ENCODE measurements at regions of chr7 and their contacts with region 1.

Region 1: GRCh38 chr7:91852263-91852741 is 28.2 kb downstream of the MTERF1 start:
- DNase-seq: no peak
- ATAC-seq: peak; percentile 95
- H3K4me3 Mint-ChIP-seq: no peak overlapping the region
- H3K27ac Mint-ChIP-seq: no peak overlapping the region
- H3K4me1 Mint-ChIP-seq: no peaks in the 10 kb centered on the region
- H3K27me3 Mint-ChIP-seq: no peaks in the 10 kb centered on the region; the same call in 1 of the 2 replicates
- CTCF ChIP-seq: peak; percentile 46

Region 2: DNA sequence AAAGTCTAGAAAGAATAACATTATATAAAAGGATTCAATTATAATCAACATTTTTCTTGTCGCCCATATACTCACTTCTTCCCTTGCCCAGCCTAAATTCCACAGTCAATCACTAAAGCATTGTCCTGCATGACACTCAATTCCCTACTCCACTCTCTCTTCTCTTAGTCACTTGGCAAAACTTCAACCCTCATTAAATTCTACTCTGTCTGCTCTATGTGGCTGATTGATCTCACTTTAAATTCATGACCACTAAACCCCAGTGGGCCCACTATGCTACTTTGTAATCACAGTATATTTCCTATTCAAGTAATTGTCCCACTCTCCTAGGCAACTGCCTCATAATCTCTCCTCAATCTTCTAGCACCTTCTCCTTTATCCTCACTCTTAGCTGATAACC is 25.9 kb before region 1 on chr7:
- CTCF ChIA-PET with region 1: interaction called, 17 read pairs
- POLR2A ChIA-PET with region 1: no interaction called
- DNase-seq: no peak
- ATAC-seq: no peak
- H3K4me3 Mint-ChIP-seq: no peak overlapping the region
- H3K27ac Mint-ChIP-seq: no peak overlapping the region
- H3K4me1 Mint-ChIP-seq: no peaks in the 10 kb centered on the region
- H3K27me3 Mint-ChIP-seq: no peaks in the 10 kb centered on the region; the same call in 1 of the 2 replicates
- CTCF ChIP-seq: no peak

Region 3: GRCh38 chr7:91913612-91914011 is 61.3 kb after region 1 on chr7:
- CTCF ChIA-PET with region 1: no interaction called
- POLR2A ChIA-PET with region 1: no interaction called
- DNase-seq: no peak
- ATAC-seq: no peak
- H3K4me3 Mint-ChIP-seq: no peak overlapping the region
- H3K27ac Mint-ChIP-seq: no peak overlapping the region
- H3K4me1 Mint-ChIP-seq: peaks cover 11% of the 10 kb centered on the region
- H3K27me3 Mint-ChIP-seq: peaks cover 11% of the 10 kb centered on the region; the same call in 1 of the 2 replicates
- CTCF ChIP-seq: no peak

Measured in WTC11 (cell line).